Prostate gland (tissue), 2 donors: ENCODE measurements at regions of chr12 and their contacts with region 1.

Region 1: GRCh38 chr12:113048716-113049127 is 7.8 kb upstream of the DTX1 start:
- DNase-seq: peak; percentile 53
- H3K4me3 ChIP-seq: no peak overlapping the region
- H3K27ac ChIP-seq: no peak overlapping the region
- H3K4me1 ChIP-seq: no peaks in the 10 kb centered on the region
- H3K27me3 ChIP-seq: no peaks in the 10 kb centered on the region
- CTCF ChIP-seq: peak; percentile 67 to 91 (median 78)
- POLR2A ChIP-seq: no peak

Region 2: DNA sequence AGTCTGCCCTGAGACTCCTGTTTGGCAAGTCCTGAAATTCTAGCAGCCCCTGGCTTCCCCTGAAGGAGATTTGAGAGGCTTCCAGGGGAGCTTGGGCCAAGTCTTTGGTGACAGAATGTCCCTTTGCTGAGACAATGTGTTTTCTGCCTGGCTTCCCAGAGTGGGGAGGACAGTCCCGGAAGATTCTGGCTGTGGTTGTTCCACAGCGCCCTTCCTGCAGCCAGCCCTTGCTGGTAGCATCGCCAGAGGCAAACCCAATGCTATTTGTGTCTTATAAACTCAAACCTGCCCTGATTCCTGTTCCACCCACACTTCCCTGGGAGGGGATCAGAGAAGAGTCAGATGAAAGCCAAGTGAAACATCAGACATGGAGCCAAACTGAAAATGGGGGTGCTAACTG is 198.3 kb before region 1 on chr12:
- intact Hi-C with region 1: no loop called
- DNase-seq: no peak
- H3K4me3 ChIP-seq: no peak overlapping the region
- H3K27ac ChIP-seq: no peak overlapping the region
- H3K4me1 ChIP-seq: no peaks in the 10 kb centered on the region
- H3K27me3 ChIP-seq: peaks cover 3% of the 10 kb centered on the region
- CTCF ChIP-seq: no peak
- POLR2A ChIP-seq: no peak

Region 3: DNA sequence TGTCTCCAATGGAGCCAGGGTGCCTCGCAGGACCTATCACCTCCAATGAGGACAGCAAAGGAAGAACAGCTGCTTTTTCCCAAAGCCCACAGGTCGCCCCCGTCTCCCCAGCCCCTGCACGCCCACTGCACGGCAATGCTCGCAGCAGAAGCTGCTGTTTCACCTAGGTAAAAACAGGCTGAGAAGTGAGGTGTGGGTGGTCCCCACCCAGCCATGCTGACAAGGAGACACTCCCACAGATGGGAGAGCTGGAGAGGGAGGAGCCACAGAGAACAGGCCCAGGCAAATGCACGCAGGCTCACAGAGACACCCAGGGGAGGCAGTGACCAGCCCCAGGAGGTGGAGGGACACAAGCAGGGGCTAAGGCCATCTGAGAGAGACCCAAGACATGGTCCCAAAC is 111.2 kb after region 1 on chr12:
- intact Hi-C with region 1: loop called (anchors 5 kb)
- DNase-seq: no peak
- H3K4me3 ChIP-seq: no peak overlapping the region
- H3K27ac ChIP-seq: no peak overlapping the region
- H3K4me1 ChIP-seq: no peaks in the 10 kb centered on the region
- H3K27me3 ChIP-seq: no peaks in the 10 kb centered on the region
- CTCF ChIP-seq: no peak
- POLR2A ChIP-seq: no peak

Region 4: GRCh38 chr12:113174461-113175384 is 126.0 kb after region 1 on chr12:
- intact Hi-C with region 1: loop called (anchors 5 kb)
- DNase-seq: peak; percentile 41
- H3K4me3 ChIP-seq: no peak overlapping the region
- H3K27ac ChIP-seq: no peak overlapping the region
- H3K4me1 ChIP-seq: no peaks in the 10 kb centered on the region
- H3K27me3 ChIP-seq: no peaks in the 10 kb centered on the region
- CTCF ChIP-seq: peak; percentile 75 to 97 (median 87)
- POLR2A ChIP-seq: no peak